Posterior vena cava (tissue), 2 donors: ENCODE measurements at regions of chr1 and their contacts with region 1.

Region 1: GRCh38 chr1:112955781-112956543 is at the start of gene SLC16A1:
- DNase-seq: peak; percentile 98
- total RNA-seq, gene SLC16A1: 34.0 to 39.7 TPM

Region 2: GRCh38 chr1:112605633-112606327 is 350.2 kb before region 1 on chr1:
- intact Hi-C with region 1: no loop called
- DNase-seq: no peak

Region 3: GRCh38 chr1:112882271-112882744 is 73.7 kb before region 1 on chr1:
- intact Hi-C with region 1: loop called in 1 of 2 experiments (anchors 10 kb)
- DNase-seq: no peak

Region 4: DNA sequence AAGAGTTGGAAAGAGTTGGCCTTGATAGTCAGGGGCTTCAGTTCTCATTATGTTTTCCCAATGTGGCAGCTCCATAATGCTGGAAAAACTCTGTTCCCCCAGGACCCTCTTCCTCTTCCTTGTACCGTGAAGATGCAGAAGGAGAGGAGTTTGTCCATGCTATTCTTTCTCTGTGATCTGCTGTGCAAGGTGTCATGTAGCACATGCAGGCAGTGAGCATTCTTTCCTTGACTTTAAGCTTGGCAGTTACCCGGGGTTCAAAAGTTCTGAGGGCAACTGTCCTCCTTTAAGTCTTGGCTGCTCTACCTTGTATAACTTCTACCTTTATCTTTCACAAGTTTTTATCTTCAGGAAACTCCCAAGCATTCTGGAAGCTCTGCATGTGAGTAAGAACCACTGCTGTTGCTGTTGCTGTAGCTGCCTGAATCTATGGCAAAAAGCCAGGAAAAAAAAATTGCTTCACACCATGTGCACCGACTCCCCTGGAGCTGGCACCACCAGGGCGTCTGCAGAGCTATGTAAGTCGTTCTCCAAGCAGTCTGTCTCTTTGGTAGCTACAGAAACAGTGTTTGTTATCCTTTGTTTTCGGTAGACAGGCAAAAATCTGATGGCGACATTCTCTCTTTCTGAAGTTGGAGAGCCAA is 42.8 kb after region 1 on chr1:
- intact Hi-C with region 1: loop called in 1 of 2 experiments (anchors 5 kb)
- DNase-seq: no peak